Heart left ventricle (tissue), 16 donors: ENCODE measurements at regions of chr3 and their contacts with region 1.

Region 1: DNA sequence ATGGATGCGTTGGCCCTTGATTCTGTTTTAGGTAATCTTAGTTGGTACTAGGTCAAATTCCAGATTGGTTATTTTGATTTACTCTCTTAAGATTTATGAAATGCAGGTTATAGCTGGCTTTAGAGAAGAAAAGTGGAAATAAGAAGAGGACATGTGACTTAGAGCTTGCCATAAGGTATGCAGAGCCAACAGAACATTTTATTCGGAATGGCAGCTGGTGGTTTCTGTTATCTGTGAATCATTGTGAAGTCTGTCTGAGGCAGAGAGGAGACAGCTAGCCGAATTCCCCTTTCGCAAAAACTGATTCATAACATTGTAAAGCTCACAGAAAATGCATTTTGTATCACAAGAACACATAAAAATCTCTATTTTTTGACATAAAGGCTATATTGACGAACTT is 82.1 kb downstream of the FILIP1L start:
- DNase-seq: no peak
- ATAC-seq: peak in 3 of 4 donors; percentile 38 to 77 (median 54)
- H3K4me3 ChIP-seq: no peak overlapping the region
- H3K27ac ChIP-seq: peak overlapping the region in 1 of 12 donors; percentile 47
- H3K4me1 ChIP-seq: peaks cover 0 to 27% (median 10%) of the 10 kb centered on the region in 12 donors
- H3K27me3 ChIP-seq: no peaks in the 10 kb centered on the region
- CTCF ChIP-seq: no peak
- POLR2A ChIP-seq: no peak

Region 2: DNA sequence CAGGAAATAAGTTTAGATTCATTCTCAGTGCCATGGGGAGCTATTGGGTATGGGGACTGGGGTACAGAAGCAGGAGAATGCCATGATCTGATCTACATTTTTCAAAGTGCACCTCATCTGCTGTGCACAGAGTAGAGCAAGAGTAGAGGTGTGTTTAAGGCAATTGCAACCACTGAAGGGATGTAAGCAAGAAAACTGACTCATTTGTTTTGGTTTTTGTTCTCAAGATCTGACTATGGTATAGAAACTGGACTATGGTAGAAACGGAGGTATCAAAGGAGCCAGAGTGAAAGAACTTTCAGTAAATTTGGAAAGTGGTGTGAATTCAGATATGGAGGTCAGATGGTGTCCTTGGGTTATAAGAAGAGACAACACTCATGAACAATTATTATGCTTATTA is 300.7 kb before region 1 on chr3:
- intact Hi-C with region 1: no loop called
- DNase-seq: no peak
- ATAC-seq: no peak
- H3K4me3 ChIP-seq: no peak overlapping the region
- H3K27ac ChIP-seq: no peak overlapping the region
- H3K4me1 ChIP-seq: peaks cover 0 to 4% (median 0%) of the 10 kb centered on the region in 12 donors
- H3K27me3 ChIP-seq: no peaks in the 10 kb centered on the region
- CTCF ChIP-seq: no peak
- POLR2A ChIP-seq: no peak

Region 3: GRCh38 chr3:99945328-99945995 is 86.8 kb before region 1 on chr3:
- intact Hi-C with region 1: loop called in 1 of 10 experiments (anchors 5 kb)
- DNase-seq: peak in 2 of 5 donors; percentile 37 to 41
- ATAC-seq: peak; percentile 44 to 62 (median 54)
- H3K4me3 ChIP-seq: no peak overlapping the region
- H3K27ac ChIP-seq: peak overlapping the region in 10 of 12 donors; percentile 3 to 79 (median 28)
- H3K4me1 ChIP-seq: peaks cover 0 to 52% (median 39%) of the 10 kb centered on the region in 12 donors
- H3K27me3 ChIP-seq: no peaks in the 10 kb centered on the region
- CTCF ChIP-seq: no peak
- POLR2A ChIP-seq: no peak

Region 4: DNA sequence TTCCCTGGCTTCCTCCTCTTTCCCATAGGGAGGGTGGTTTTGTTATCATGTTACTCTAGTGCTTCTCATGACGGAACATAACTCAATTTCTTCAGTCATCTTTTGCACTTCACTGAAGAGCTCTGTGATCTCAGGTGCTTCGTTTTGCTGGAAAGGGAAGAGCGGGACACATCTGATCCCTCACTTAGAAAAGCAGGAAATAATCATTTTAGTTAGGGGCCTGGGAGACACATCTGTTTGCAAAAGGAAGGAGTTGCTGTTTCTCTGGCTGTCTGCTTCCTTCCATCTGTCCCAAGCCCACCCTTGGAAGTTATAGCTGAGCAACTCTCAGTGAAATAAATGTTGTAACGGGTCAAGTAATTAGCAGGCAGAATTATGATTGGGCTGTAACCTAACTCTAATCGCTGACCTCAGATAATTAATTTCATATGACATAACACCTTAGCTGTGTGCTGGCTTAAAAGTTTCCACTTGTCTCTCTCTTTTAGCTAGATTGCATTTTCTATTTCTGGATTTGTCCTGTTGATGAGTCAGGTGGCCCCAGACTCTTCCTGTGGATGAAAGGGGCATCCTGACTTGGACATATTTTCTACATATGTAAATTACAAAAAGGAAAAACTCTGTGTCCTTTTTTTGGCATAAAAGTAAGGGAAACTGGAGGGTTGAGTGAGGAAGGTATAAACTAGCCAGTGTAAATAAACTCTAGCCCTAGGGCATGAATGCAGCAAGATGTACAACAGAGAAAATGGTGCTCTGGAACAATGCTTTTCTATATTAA is 93.1 kb after region 1 on chr3:
- intact Hi-C with region 1: no loop called
- DNase-seq: no peak
- ATAC-seq: peak; percentile 34 to 73 (median 64)
- H3K4me3 ChIP-seq: no peak overlapping the region
- H3K27ac ChIP-seq: peak overlapping the region; percentile 11 to 72 (median 63)
- H3K4me1 ChIP-seq: peaks cover 4 to 44% (median 30%) of the 10 kb centered on the region in 12 donors
- H3K27me3 ChIP-seq: no peaks in the 10 kb centered on the region
- CTCF ChIP-seq: no peak
- POLR2A ChIP-seq: no peak

Region 5: DNA sequence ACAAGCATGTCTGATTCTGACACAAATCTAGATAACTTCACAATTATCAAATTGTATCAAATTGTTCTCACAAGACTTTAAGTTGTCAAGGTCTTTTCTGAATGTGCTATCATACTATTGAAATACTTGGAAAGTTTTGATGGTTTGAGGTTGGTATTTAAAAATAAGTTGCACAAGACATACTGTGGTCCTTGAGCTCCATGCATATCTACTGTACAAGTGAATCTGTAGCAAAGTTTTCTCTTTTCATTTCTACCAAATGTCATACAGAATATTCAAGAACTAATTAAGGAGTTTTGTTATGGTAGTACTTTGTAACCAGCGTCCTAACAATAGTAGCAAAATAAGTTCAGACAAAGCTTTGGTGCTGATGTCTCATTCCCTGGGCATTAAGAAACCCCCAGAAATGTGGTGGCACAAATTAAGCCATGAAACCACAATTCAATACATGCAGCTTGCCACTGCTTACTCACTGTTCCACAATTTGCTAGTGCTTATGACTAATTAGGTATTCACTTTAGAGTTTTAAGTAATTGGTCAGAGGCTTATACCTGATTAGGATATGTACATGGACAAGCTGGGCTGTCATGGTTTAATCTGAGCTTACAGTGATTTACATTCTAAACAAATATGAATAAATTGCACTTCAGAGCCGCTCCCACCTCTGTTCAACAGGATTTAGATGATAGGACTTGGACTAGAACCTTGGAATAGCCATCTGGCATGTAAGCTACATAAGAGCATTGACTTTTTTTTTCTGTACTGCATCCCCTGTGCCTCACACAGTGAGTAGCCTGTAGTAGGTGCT is 237.4 kb after region 1 on chr3:
- intact Hi-C with region 1: no loop called
- DNase-seq: no peak
- ATAC-seq: peak in 1 of 4 donors; percentile 32
- H3K4me3 ChIP-seq: no peak overlapping the region
- H3K27ac ChIP-seq: no peak overlapping the region
- H3K4me1 ChIP-seq: peaks cover 0 to 53% (median 31%) of the 10 kb centered on the region in 12 donors
- H3K27me3 ChIP-seq: no peaks in the 10 kb centered on the region
- CTCF ChIP-seq: no peak
- POLR2A ChIP-seq: no peak